CD8-positive, alpha-beta T cell (primary cell): ENCODE measurements at regions of chr4 and their contacts with region 1.

Region 1: DNA sequence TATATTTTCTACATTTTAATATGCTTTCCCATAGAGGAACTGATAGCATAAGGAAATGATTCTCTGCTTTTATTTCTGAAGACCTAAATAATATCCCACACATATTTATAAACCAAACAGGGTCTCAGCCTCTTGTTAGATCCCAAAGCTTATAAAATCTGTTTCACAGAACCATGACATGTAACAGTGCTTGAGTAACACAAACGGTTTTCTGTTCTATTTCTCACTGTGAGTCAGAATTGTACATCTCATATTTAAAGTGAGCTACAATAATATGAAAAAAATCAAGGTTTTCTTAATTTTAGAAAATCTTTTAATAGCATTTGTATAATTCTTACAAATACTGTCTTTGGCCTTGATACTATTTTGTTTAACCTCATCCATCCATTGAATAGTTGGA is 51.2 kb downstream of the NR3C2 start:
- DNase-seq: no peak
- ATAC-seq: no peak
- H3K4me3 ChIP-seq: no peak overlapping the region
- H3K4me3 Mint-ChIP-seq: no peak overlapping the region
- H3K27ac ChIP-seq: no peak overlapping the region
- H3K27ac Mint-ChIP-seq: peak overlapping the region; percentile 9
- H3K4me1 ChIP-seq: no peaks in the 10 kb centered on the region
- H3K4me1 Mint-ChIP-seq: peaks cover 56% of the 10 kb centered on the region
- H3K27me3 ChIP-seq: no peaks in the 10 kb centered on the region
- H3K27me3 Mint-ChIP-seq: no peaks in the 10 kb centered on the region
- CTCF ChIP-seq: no peak

Region 2: GRCh38 chr4:148355442-148356123 is 35.5 kb before region 1 on chr4:
- CTCF ChIA-PET with region 1: no interaction called
- POLR2A ChIA-PET with region 1: no interaction called
- intact Hi-C with region 1: loop called in 1 of 2 experiments (anchors 2 kb)
- DNase-seq: no peak
- ATAC-seq: no peak
- H3K4me3 ChIP-seq: no peak overlapping the region
- H3K4me3 Mint-ChIP-seq: peak overlapping the region; percentile 42
- H3K27ac ChIP-seq: no peak overlapping the region
- H3K27ac Mint-ChIP-seq: peak overlapping the region; percentile 12
- H3K4me1 ChIP-seq: peaks cover 17% of the 10 kb centered on the region
- H3K4me1 Mint-ChIP-seq: peaks cover 52% of the 10 kb centered on the region
- H3K27me3 ChIP-seq: no peaks in the 10 kb centered on the region
- H3K27me3 Mint-ChIP-seq: no peaks in the 10 kb centered on the region
- CTCF ChIP-seq: no peak

Region 3: DNA sequence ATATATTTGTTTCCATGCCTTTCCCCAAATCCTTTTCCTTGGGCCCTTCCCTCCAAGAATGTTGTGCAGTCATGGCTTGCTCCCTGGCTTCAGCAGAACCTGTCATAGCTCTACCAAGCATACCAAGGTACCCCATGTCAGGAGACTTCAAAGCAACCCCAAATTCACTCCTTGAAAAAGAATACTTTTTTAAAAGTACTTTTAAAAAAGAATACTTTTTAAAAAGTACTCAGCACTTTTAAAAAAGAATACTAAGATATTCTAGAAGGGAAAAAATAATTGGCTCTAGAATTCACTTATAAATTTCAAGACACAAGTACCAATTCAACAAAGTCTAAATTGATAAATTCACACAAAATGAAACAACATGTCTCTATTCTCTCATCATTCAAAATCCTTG is 24.8 kb before region 1 on chr4:
- CTCF ChIA-PET with region 1: no interaction called
- POLR2A ChIA-PET with region 1: no interaction called
- intact Hi-C with region 1: loop called in 1 of 2 experiments (anchors 2 kb)
- DNase-seq: no peak
- ATAC-seq: no peak
- H3K4me3 ChIP-seq: no peak overlapping the region
- H3K4me3 Mint-ChIP-seq: no peak overlapping the region
- H3K27ac ChIP-seq: no peak overlapping the region
- H3K27ac Mint-ChIP-seq: no peak overlapping the region
- H3K4me1 ChIP-seq: peaks cover 10% of the 10 kb centered on the region
- H3K4me1 Mint-ChIP-seq: peaks cover 58% of the 10 kb centered on the region
- H3K27me3 ChIP-seq: no peaks in the 10 kb centered on the region
- H3K27me3 Mint-ChIP-seq: no peaks in the 10 kb centered on the region
- CTCF ChIP-seq: no peak

Region 4: GRCh38 chr4:148557793-148558192 is 166.7 kb after region 1 on chr4:
- CTCF ChIA-PET with region 1: no interaction called
- POLR2A ChIA-PET with region 1: no interaction called
- intact Hi-C with region 1: no loop called
- DNase-seq: no peak
- ATAC-seq: no peak
- H3K4me3 ChIP-seq: no peak overlapping the region
- H3K4me3 Mint-ChIP-seq: no peak overlapping the region
- H3K27ac ChIP-seq: no peak overlapping the region
- H3K27ac Mint-ChIP-seq: no peak overlapping the region
- H3K4me1 ChIP-seq: no peaks in the 10 kb centered on the region
- H3K4me1 Mint-ChIP-seq: no peaks in the 10 kb centered on the region
- H3K27me3 ChIP-seq: no peaks in the 10 kb centered on the region
- H3K27me3 Mint-ChIP-seq: no peaks in the 10 kb centered on the region
- CTCF ChIP-seq: no peak

Region 5: GRCh38 chr4:148634486-148634885 is 243.4 kb after region 1 on chr4:
- CTCF ChIA-PET with region 1: no interaction called
- POLR2A ChIA-PET with region 1: no interaction called
- intact Hi-C with region 1: no loop called
- DNase-seq: no peak
- ATAC-seq: no peak
- H3K4me3 ChIP-seq: no peak overlapping the region
- H3K4me3 Mint-ChIP-seq: no peak overlapping the region
- H3K27ac ChIP-seq: no peak overlapping the region
- H3K27ac Mint-ChIP-seq: no peak overlapping the region
- H3K4me1 ChIP-seq: no peaks in the 10 kb centered on the region
- H3K4me1 Mint-ChIP-seq: no peaks in the 10 kb centered on the region
- H3K27me3 ChIP-seq: no peaks in the 10 kb centered on the region
- H3K27me3 Mint-ChIP-seq: no peaks in the 10 kb centered on the region
- CTCF ChIP-seq: no peak

Region 6: DNA sequence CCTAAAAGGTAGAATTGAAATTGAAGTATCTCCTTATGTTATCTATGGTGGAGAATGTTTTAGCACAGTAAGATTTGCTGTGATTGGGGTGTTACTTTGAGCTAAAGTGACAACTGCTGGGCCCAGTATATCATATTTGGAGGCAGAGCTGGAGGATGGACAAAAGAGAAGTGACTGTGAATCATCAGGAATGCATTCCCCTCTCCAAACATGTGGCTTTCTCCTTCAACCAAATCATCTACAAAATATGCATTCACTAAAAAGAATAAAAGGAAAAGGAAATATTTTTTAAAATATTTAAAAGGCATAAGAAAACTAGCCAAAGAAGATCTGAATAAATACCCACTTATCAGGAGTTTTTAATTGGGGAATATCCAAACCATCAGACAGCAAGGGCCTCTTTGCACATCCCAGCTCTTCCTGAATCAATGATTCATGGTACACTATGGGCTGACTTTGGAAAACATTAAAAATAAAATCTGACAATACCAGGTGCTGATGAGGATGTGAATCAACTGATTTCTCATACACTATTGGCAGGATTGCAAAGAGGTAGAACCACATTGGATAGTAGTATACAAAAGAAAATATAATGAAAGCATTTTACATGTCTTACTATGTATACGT is 722.9 kb after region 1 on chr4:
- CTCF ChIA-PET with region 1: no interaction called
- POLR2A ChIA-PET with region 1: no interaction called
- intact Hi-C with region 1: no loop called
- DNase-seq: no peak
- ATAC-seq: no peak
- H3K4me3 ChIP-seq: no peak overlapping the region
- H3K4me3 Mint-ChIP-seq: no peak overlapping the region
- H3K27ac ChIP-seq: no peak overlapping the region
- H3K27ac Mint-ChIP-seq: no peak overlapping the region
- H3K4me1 ChIP-seq: no peaks in the 10 kb centered on the region
- H3K4me1 Mint-ChIP-seq: no peaks in the 10 kb centered on the region
- H3K27me3 ChIP-seq: no peaks in the 10 kb centered on the region
- H3K27me3 Mint-ChIP-seq: no peaks in the 10 kb centered on the region
- CTCF ChIP-seq: no peak